ENCODE measurements at regions of chr19 and their contacts with region 1.

Region 1: GRCh38 chr19:51427201-51427600 is 9.8 kb upstream of the SIGLEC10 start:
- DNase-seq: no peak

Region 2: DNA sequence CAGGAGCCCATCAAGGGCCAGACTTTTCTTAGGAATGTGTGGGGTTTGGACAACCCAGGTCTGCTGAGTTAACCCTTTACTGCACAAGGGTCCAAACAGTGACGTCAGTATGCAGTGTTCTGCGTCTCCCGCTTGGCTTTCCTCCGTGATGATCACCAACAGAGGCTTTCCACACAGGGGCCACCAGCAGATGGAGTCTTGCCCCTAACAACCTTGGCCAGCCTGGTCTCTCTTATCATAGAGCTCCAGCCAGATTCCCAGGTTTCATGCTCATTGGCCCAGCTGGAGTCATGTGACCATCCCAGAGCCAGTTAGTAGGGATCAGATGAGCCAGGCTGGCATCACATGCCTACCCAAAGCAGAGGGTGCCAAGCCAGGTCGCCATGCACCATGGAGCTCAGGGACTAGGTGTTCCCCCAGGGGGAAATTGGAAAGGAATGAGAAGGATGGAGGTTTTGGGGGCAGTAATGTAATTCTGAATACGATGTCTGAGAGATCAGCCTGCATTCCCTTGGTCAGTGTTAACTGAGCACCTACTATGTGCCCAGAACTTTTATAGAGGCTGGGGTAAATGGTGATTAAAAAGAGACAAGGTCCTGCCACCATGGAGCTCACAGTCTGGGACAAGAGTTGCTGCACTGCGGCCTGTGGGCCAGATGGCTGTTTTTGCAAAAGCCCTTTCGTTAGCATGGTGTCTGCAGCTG is 1162.6 kb before region 1 on chr19:
- intact Hi-C with region 1: loop called in 1 of 2 experiments (anchors 5 kb)
- DNase-seq: no peak